Heart left ventricle (tissue), 16 donors: ENCODE measurements at regions of chr1 and their contacts with region 1.

Region 1: GRCh38 chr1:67060811-67061218 is 6.9 kb upstream of the SLC35D1 start:
- DNase-seq: no peak
- ATAC-seq: peak in 3 of 4 donors; percentile 55 to 80 (median 71)
- H3K4me3 ChIP-seq: no peak overlapping the region
- H3K27ac ChIP-seq: no peak overlapping the region
- H3K4me1 ChIP-seq: no peaks in the 10 kb centered on the region
- H3K27me3 ChIP-seq: no peaks in the 10 kb centered on the region
- CTCF ChIP-seq: no peak
- POLR2A ChIP-seq: no peak

Region 2: GRCh38 chr1:67019600-67020136 is 41.1 kb before region 1 on chr1:
- intact Hi-C with region 1: no loop called
- DNase-seq: peak in 1 of 5 donors; percentile 22
- ATAC-seq: peak; percentile 58 to 84 (median 82)
- H3K4me3 ChIP-seq: no peak overlapping the region
- H3K27ac ChIP-seq: peak overlapping the region in 11 of 12 donors; percentile 1 to 84 (median 56)
- H3K4me1 ChIP-seq: peaks cover 3 to 28% (median 20%) of the 10 kb centered on the region in 12 donors
- H3K27me3 ChIP-seq: no peaks in the 10 kb centered on the region
- CTCF ChIP-seq: no peak
- POLR2A ChIP-seq: no peak

Region 3: DNA sequence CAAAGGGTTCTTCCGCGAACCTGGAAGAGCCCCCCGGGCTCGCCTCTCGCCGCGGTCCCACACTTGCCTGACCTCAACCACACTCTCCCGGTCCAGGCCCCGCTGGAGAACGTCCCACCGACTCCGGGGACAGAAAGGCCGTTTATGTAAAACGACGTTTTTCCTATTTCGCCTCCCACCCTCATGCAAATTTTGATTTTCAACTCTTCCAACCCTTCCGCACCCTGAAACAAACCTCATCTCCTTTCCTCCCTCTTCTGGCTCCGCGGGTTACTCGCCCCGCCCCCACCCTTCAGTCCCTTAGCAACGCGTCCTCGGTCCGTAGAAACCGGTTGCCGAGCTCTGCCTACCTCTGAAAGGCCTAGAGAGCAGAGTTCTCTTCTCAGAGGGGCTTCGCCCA is 73.9 kb after region 1 on chr1 and contains the start of gene C1orf141:
- intact Hi-C with region 1: loop called in 1 of 10 experiments (anchors 10 kb)
- DNase-seq: peak in 2 of 5 donors; percentile 26 to 47
- ATAC-seq: peak; percentile 51 to 60 (median 57)
- H3K4me3 ChIP-seq: peak within 1 kb of the TSS in 10 of 12 donors; percentile 20 to 52 (median 39)
- H3K27ac ChIP-seq: peak within 1 kb of the TSS in 1 of 12 donors; percentile 13
- H3K4me1 ChIP-seq: peaks cover 0 to 10% (median 5%) of the 10 kb centered on the region in 12 donors
- H3K27me3 ChIP-seq: peaks cover 0 to 3% (median 0%) of the 10 kb centered on the region in 9 donors
- CTCF ChIP-seq: no peak
- POLR2A ChIP-seq: no peak
- total RNA-seq, gene C1orf141: not detected

Region 4: GRCh38 chr1:67723620-67724019 is 662.8 kb after region 1 on chr1:
- intact Hi-C with region 1: no loop called
- DNase-seq: no peak
- ATAC-seq: peak; percentile 39 to 80 (median 78)
- H3K4me3 ChIP-seq: no peak overlapping the region
- H3K27ac ChIP-seq: peak overlapping the region in 11 of 12 donors; percentile 26 to 74 (median 63)
- H3K4me1 ChIP-seq: peaks cover 11 to 53% (median 35%) of the 10 kb centered on the region in 12 donors
- H3K27me3 ChIP-seq: no peaks in the 10 kb centered on the region
- CTCF ChIP-seq: no peak
- POLR2A ChIP-seq: no peak